Activated naive CD4-positive, alpha-beta T cell treated with anti-CD3 and anti-CD28 coated beads for 36 hours (primary cell): ENCODE measurements at regions of chr21 and their contacts with region 1.

Region 1: GRCh38 chr21:45768751-45769070 is 125.2 kb downstream of the PCBP3 start:
- DNase-seq: peak; percentile 66
- H3K4me3 Mint-ChIP-seq: peak overlapping the region; percentile 43
- H3K27ac Mint-ChIP-seq: peak overlapping the region; percentile 95
- H3K4me1 Mint-ChIP-seq: peaks cover 46% of the 10 kb centered on the region
- H3K27me3 Mint-ChIP-seq: no peaks in the 10 kb centered on the region

Region 2: GRCh38 chr21:45478115-45478801 is 290.5 kb before region 1 on chr21:
- CTCF ChIA-PET with region 1: no interaction called
- intact Hi-C with region 1: loop called (anchors 1 kb)
- DNase-seq: peak; percentile 90
- H3K4me3 Mint-ChIP-seq: peak overlapping the region; percentile 71
- H3K27ac Mint-ChIP-seq: peak overlapping the region; percentile 94
- H3K4me1 Mint-ChIP-seq: peaks cover 30% of the 10 kb centered on the region
- H3K27me3 Mint-ChIP-seq: no peaks in the 10 kb centered on the region

Region 3: GRCh38 chr21:45643021-45643980 is 125.4 kb before region 1 on chr21 and contains the start of gene PCBP3:
- CTCF ChIA-PET with region 1: interaction called, 3 read pairs
- intact Hi-C with region 1: loop called (anchors 1 kb)
- DNase-seq: peak; percentile 99
- H3K4me3 Mint-ChIP-seq: peak within 1 kb of the TSS; percentile 76
- H3K27ac Mint-ChIP-seq: no peak within 1 kb of the TSS
- H3K4me1 Mint-ChIP-seq: peaks cover 46% of the 10 kb centered on the region
- H3K27me3 Mint-ChIP-seq: peaks cover 5% of the 10 kb centered on the region
- total RNA-seq, gene PCBP3: 10.0 to 10.2 TPM

Region 4: GRCh38 chr21:45698493-45699184 is 70.1 kb before region 1 on chr21:
- CTCF ChIA-PET with region 1: no interaction called
- intact Hi-C with region 1: loop called (anchors 1 kb)
- DNase-seq: peak; percentile 56
- H3K4me3 Mint-ChIP-seq: no peak overlapping the region
- H3K27ac Mint-ChIP-seq: peak overlapping the region; percentile 79
- H3K4me1 Mint-ChIP-seq: peaks cover 38% of the 10 kb centered on the region
- H3K27me3 Mint-ChIP-seq: no peaks in the 10 kb centered on the region

Region 5: DNA sequence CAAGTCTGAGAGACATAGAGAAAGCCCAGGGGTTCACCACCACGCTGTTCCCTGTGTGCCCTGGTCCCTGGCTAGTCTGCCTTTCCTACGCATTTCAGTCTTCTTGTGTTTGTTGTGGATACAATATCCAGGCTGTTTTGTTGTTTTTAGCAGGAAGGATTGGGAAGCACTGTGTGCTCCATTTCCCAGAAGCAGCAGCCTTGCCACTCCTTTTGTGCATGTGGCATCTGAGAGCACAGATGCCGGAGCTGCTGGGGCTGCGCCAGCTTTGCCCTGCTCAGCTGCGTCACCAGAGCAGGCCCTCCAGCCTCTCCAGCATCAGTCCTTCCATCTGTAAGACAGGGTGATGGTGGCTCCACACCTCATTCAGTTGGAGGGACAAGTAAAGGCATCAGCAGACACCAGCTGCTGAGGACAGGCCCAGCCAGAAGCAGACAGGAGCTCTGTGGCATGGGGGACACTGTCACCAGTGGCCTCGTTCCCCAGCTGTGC is 118.5 kb after region 1 on chr21:
- CTCF ChIA-PET with region 1: no interaction called
- intact Hi-C with region 1: loop called (anchors 2 kb)
- DNase-seq: no peak
- H3K4me3 Mint-ChIP-seq: no peak overlapping the region
- H3K27ac Mint-ChIP-seq: peak overlapping the region; percentile 27
- H3K4me1 Mint-ChIP-seq: peaks cover 66% of the 10 kb centered on the region
- H3K27me3 Mint-ChIP-seq: no peaks in the 10 kb centered on the region

Region 6: DNA sequence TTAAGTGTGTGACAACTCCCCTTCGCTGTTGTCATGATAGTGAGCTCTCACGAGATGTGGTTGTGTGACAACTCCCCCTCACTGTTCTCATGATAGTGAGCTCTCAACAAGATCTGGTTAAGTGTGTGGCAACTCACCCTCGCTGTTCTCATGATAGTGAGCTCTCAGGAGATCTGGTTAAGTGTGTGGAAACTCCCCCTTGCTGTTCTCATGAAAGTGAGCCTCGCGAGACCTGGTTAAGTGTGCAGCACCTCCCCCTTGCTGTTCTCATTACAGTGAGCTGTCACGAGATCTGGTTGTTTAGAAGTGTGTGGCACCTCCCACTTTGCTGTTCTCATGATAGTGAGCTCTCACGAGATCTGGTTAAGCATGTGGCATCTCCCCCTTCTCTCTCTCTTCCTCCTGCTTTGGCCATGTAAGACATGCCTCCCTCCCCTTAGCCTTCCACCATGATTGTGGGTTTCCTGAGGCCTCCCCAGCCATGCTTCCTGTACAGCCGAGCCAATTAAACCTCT is 485.0 kb after region 1 on chr21:
- CTCF ChIA-PET with region 1: no interaction called
- intact Hi-C with region 1: no loop called
- DNase-seq: peak; percentile 82
- H3K4me3 Mint-ChIP-seq: no peak overlapping the region
- H3K27ac Mint-ChIP-seq: peak overlapping the region; percentile 86
- H3K4me1 Mint-ChIP-seq: peaks cover 34% of the 10 kb centered on the region
- H3K27me3 Mint-ChIP-seq: no peaks in the 10 kb centered on the region